CD8-positive, alpha-beta T cell (primary cell): ENCODE measurements at regions of chr3 and their contacts with region 1.

Region 1: GRCh38 chr3:114290911-114291901 is 2.6 kb upstream of the TIGIT start:
- DNase-seq: peak; percentile 86 to 97 (median 93)
- ATAC-seq: peak; percentile 76
- H3K4me3 ChIP-seq: peak overlapping the region in 1 of 2 experiments; percentile 48
- H3K4me3 Mint-ChIP-seq: peak overlapping the region; percentile 80
- H3K27ac ChIP-seq: peak overlapping the region; percentile 60 to 89
- H3K27ac Mint-ChIP-seq: peak overlapping the region; percentile 96
- H3K4me1 ChIP-seq: peaks cover 27% of the 10 kb centered on the region
- H3K4me1 Mint-ChIP-seq: peaks cover 43% of the 10 kb centered on the region
- H3K27me3 ChIP-seq: no peaks in the 10 kb centered on the region
- H3K27me3 Mint-ChIP-seq: no peaks in the 10 kb centered on the region
- CTCF ChIP-seq: peak; percentile 87

Region 2: GRCh38 chr3:113696658-113697499 is 594.3 kb before region 1 on chr3:
- CTCF ChIA-PET with region 1: no interaction called
- POLR2A ChIA-PET with region 1: no interaction called
- intact Hi-C with region 1: no loop called
- DNase-seq: peak; percentile 96 to 100 (median 99)
- ATAC-seq: peak; percentile 84
- H3K4me3 ChIP-seq: peak overlapping the region; percentile 69 to 86
- H3K4me3 Mint-ChIP-seq: no peak overlapping the region
- H3K27ac ChIP-seq: peak overlapping the region; percentile 88 to 89
- H3K27ac Mint-ChIP-seq: no peak overlapping the region
- H3K4me1 ChIP-seq: peaks cover 32% of the 10 kb centered on the region
- H3K4me1 Mint-ChIP-seq: peaks cover 28% of the 10 kb centered on the region
- H3K27me3 ChIP-seq: no peaks in the 10 kb centered on the region
- H3K27me3 Mint-ChIP-seq: no peaks in the 10 kb centered on the region
- CTCF ChIP-seq: no peak

Region 3: DNA sequence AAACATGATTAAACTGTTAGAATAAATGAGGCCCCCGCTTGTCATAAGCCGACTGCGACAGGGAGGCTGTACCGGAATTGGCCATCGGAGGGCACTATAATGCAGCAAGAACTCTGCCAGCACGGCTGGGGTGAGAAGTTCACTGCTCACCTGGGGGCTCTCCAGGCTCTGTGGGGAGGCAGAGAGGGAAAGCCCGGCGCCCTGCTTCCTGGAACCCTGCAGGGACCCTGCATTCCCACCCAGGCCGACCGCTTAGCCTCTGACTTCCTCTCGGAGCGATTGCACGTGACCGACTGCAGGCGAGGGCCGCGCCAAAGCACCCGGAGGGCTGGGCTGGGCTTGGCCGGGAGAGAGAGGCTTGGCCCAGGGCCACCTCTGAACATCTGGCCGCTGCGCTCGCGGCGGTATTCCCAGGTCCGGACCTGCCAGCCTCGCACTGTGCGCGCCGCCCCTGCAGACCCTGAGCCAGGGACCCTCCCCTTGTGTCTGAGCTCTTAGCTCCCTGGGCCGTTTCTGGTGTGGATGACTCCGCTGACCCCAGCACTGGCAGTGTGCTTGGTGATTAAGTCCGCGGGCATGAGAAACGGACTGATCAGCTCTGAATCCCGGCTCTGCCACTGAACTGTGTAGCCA is 138.6 kb before region 1 on chr3:
- CTCF ChIA-PET with region 1: interaction called, 35 read pairs
- POLR2A ChIA-PET with region 1: no interaction called
- intact Hi-C with region 1: loop called (anchors 2 kb)
- DNase-seq: peak; percentile 76 to 91 (median 87)
- ATAC-seq: peak; percentile 100
- H3K4me3 ChIP-seq: peak overlapping the region; percentile 46 to 50
- H3K4me3 Mint-ChIP-seq: peak overlapping the region; percentile 73
- H3K27ac ChIP-seq: peak overlapping the region in 1 of 2 experiments; percentile 47
- H3K27ac Mint-ChIP-seq: no peak overlapping the region
- H3K4me1 ChIP-seq: peaks cover 8% of the 10 kb centered on the region
- H3K4me1 Mint-ChIP-seq: peaks cover 10% of the 10 kb centered on the region
- H3K27me3 ChIP-seq: no peaks in the 10 kb centered on the region
- H3K27me3 Mint-ChIP-seq: no peaks in the 10 kb centered on the region
- CTCF ChIP-seq: peak; percentile 99

Region 4: DNA sequence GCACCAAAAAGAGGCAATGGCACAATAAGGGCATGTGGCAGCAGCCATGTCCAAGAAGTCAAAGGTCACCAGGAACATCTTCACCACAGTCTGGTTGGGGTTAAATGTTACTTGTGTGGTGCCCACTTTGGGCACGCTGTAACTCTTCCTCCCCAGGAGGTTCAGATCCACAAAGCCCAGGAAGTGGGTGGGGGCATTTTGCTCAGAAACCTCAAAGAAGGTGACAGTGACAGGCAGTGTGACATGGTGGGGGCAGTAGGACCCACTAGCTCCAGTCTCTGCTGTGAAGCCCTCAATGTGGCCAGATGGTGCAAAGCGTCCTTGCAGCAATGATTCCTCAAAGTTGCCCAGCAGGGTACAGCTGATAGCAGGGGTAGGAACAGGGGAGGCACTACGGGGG is 59.6 kb before region 1 on chr3:
- CTCF ChIA-PET with region 1: interaction called, 7 read pairs
- POLR2A ChIA-PET with region 1: interaction called, 8 read pairs
- intact Hi-C with region 1: loop called (anchors 5 kb)
- DNase-seq: peak in 8 of 9 experiments; percentile 15 to 88 (median 70)
- ATAC-seq: peak; percentile 88
- H3K4me3 ChIP-seq: peak overlapping the region in 1 of 2 experiments; percentile 38
- H3K4me3 Mint-ChIP-seq: peak overlapping the region; percentile 65
- H3K27ac ChIP-seq: peak overlapping the region; percentile 58 to 85
- H3K27ac Mint-ChIP-seq: peak overlapping the region; percentile 96
- H3K4me1 ChIP-seq: peaks cover 89% of the 10 kb centered on the region
- H3K4me1 Mint-ChIP-seq: peaks cover 91% of the 10 kb centered on the region
- H3K27me3 ChIP-seq: no peaks in the 10 kb centered on the region
- H3K27me3 Mint-ChIP-seq: no peaks in the 10 kb centered on the region
- CTCF ChIP-seq: no peak

Region 5: DNA sequence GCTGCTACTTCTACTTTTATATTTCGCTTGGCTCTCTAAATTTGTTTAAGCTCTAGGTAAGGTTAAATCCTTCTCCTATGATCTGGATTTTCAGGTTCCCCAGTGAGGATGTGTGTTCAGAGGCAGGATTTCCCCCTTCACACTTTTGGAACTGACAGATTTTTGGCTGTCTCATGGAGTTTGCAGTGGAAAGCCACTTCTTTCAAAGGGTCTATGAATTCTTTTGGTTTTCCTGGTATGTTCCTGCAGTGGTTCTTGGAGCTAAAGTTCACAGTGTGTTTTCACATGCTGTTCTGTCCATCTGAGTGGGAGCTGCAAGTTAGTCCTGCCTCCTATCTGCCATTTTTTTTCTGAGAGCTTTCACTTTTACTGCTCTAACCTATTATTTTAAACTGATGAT is 18.9 kb before region 1 on chr3:
- CTCF ChIA-PET with region 1: interaction called, 11 read pairs
- POLR2A ChIA-PET with region 1: interaction called, 3 read pairs
- intact Hi-C with region 1: no loop called
- DNase-seq: no peak
- ATAC-seq: no peak
- H3K4me3 ChIP-seq: no peak overlapping the region
- H3K4me3 Mint-ChIP-seq: no peak overlapping the region
- H3K27ac ChIP-seq: no peak overlapping the region
- H3K27ac Mint-ChIP-seq: no peak overlapping the region
- H3K4me1 ChIP-seq: no peaks in the 10 kb centered on the region
- H3K4me1 Mint-ChIP-seq: no peaks in the 10 kb centered on the region
- H3K27me3 ChIP-seq: no peaks in the 10 kb centered on the region
- H3K27me3 Mint-ChIP-seq: no peaks in the 10 kb centered on the region
- CTCF ChIP-seq: no peak

Region 6: DNA sequence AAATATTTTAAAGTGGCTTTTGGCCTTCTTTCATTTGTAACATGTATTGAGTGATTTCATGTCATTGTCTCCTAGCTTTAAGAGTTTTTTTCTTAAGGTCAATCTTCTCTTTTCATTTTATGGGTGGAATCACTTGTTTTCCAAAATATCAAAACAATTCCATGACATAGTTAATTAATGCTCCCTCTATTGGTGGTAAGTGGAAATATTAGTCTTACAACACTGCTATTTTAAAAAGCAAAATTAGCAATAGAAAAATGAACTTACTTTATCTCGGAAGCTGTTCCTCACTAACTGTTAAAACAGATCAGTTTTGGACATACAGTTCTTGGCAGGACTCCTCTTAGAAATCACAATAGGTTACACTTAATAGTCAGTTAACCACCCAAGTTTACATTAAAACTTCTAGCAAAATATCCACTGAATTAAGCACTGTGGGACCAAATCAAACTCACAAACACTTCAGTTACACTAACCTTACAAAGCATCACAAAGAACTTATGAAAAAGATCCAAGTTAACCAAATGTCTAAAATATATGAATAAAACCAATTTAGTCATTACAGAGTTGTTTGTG is 45.0 kb after region 1 on chr3:
- CTCF ChIA-PET with region 1: interaction called, 5 read pairs
- POLR2A ChIA-PET with region 1: interaction called, 4 read pairs
- intact Hi-C with region 1: loop called (anchors 2 kb)
- DNase-seq: peak in 1 of 9 experiments; percentile 36
- ATAC-seq: no peak
- H3K4me3 ChIP-seq: no peak overlapping the region
- H3K4me3 Mint-ChIP-seq: no peak overlapping the region
- H3K27ac ChIP-seq: no peak overlapping the region
- H3K27ac Mint-ChIP-seq: no peak overlapping the region
- H3K4me1 ChIP-seq: no peaks in the 10 kb centered on the region
- H3K4me1 Mint-ChIP-seq: peaks cover 48% of the 10 kb centered on the region
- H3K27me3 ChIP-seq: no peaks in the 10 kb centered on the region
- H3K27me3 Mint-ChIP-seq: no peaks in the 10 kb centered on the region
- CTCF ChIP-seq: peak; percentile 61